ENCODE measurements at regions of chr7 and their contacts with region 1.

Region 1: DNA sequence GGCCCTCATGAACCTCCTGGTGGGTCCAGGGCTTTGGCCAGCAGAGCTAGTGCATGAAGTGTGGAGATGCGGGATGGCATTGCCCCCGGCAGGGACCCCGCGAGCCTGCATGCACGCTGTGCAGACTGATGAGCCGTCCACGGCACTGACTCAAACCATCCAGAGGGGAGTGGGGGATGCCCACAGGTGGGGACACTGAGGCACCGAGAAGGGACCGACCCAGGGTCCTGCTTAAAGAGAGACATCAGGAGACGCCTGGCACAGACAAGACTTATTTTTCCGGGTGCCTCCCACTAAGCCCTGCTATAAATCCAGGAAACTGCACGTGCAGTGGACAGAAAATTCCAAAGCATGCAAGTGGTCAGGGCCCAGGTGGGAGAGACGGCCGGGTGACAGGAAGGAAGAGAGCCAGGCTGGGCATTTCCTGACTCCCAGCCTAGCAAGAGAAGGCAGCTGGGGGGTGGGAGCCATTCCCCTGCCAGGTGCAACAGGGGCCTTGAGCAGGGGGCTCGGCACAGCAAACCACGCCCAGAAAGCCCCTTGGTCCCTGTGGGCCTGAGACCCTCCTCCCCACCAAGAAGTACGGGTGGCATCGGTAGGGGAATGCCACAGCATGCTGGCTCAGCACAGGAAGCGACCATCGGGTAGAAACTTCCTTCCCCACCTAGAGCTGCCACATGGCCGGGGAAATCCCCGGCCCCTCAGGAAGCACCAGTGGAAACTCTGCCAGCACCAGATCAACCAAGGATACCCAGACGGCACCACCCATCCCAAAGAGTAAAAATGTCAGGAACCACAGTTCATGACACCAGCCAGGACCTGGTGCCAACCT is 91.5 kb downstream of the FOXL3 start:
- DNase-seq: peak in 8 of 10 donors; percentile 33 to 56 (median 50)
- ATAC-seq: peak; percentile 92 to 94
- H3K4me3 Mint-ChIP-seq: peak overlapping the region in 9 of 10 donors; percentile 34 to 82 (median 74)
- H3K27ac Mint-ChIP-seq: peak overlapping the region; percentile 36 to 95 (median 84)
- H3K4me1 Mint-ChIP-seq: peaks cover 20 to 35% (median 29%) of the 10 kb centered on the region in 4 donors
- H3K27me3 Mint-ChIP-seq: no peaks in the 10 kb centered on the region

Region 2: DNA sequence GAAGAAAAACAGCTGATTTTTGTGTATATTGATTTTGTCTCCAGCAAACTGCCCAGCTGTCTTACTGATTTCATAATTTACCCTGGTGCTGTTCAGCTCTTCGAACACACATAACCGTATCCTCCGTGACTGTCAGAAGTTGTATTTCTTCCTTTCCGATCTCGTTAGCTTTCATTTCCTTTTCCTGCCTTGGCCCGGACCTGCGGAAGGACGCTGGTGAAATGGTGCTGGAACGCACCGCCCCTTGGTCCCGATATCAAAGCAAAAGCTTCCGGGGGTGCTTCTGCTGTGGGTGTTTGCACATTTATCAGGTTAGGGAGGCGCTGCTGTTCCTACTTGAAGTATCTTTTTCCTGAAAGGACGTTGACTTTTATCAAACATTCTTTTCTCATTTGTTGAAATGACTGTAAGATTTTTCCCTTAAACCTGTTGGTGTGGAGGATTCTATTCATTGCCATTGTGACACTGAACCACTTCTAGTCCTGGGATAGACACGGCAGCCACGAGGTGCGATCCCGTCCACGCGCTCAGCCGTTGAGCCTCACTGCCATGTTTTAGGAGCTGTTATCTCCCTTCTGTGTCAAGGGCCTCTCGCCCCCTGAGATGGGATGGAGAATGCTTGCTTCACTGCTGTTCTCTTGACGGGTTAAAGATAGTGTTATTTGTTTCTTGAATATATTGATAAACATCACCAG is 18.9 kb before region 1 on chr7:
- POLR2A ChIA-PET with region 1: interaction called, 11 read pairs
- DNase-seq: peak; percentile 28 to 76 (median 60)
- ATAC-seq: peak; percentile 61 to 68
- H3K4me3 Mint-ChIP-seq: peak overlapping the region; percentile 62 to 88 (median 79)
- H3K27ac Mint-ChIP-seq: peak overlapping the region; percentile 84 to 97 (median 94)
- H3K4me1 Mint-ChIP-seq: peaks cover 51 to 85% (median 72%) of the 10 kb centered on the region in 4 donors
- H3K27me3 Mint-ChIP-seq: peaks cover 0 to 9% (median 0%) of the 10 kb centered on the region in 5 donors